CD4-positive, alpha-beta memory T cell (primary cell): ENCODE measurements at regions of chr11 and their contacts with region 1.

Region 1: DNA sequence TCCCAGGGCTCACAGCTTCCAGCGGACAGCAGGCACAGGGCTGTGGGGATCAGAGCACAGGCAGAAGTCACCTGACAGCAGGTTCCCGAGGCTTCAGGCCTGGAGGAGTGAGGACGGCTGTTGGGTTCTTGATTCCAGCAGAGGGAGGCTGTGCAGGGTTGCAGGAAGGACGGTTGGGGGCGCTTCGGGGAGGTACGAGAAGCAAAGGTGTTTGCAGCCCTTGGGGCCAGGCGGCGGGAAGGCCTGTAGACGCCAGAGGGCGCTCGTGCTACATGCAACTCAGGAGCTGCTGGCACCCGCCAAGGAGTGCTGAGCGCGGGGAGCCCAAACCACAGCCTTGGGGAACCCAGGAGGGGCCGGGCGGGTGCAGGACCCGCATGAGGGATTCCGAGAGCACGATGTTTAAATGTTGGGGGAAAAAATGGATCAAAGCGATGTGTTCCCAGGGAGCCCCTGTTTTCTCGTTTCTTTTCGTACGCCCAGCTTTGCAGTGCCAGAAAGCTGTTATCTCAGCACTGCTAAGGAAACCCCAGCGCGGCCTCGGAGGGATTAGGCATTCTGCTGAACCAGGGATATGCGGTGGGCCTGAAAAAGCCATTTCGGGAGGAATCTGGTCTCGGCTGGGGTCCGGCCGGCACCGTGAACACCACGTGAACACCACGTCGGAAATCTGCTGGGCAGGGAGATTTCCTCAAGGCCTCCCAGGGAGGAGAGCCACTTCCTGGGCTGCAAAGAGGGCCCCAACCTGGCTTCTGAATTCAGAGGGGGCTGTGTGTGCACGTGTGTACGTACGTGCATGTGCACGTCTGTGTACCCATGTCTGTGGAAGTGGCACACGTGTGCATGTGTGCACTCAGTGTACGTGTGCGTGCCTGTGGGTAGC is 88.1 kb downstream of the KCNQ1 start:
- DNase-seq: peak; percentile 82 to 88 (median 86)
- H3K4me3 ChIP-seq: no peak overlapping the region
- H3K4me3 Mint-ChIP-seq: peak overlapping the region; percentile 27 to 80 (median 72)
- H3K27ac ChIP-seq: no peak overlapping the region
- H3K27ac Mint-ChIP-seq: peak overlapping the region in 2 of 7 donors; percentile 24 to 37
- H3K4me1 ChIP-seq: peaks cover 14% of the 10 kb centered on the region
- H3K4me1 Mint-ChIP-seq: peaks cover 6 to 20% (median 14%) of the 10 kb centered on the region in 4 donors
- H3K27me3 ChIP-seq: no peaks in the 10 kb centered on the region
- H3K27me3 Mint-ChIP-seq: no peaks in the 10 kb centered on the region

Region 2: GRCh38 chr11:2305140-2305840 is 227.7 kb before region 1 on chr11:
- CTCF ChIA-PET with region 1: interaction called, 17 read pairs
- POLR2A ChIA-PET with region 1: no interaction called
- intact Hi-C with region 1: loop called (anchors 1 kb)
- DNase-seq: peak; percentile 71 to 79 (median 74)
- H3K4me3 ChIP-seq: peak overlapping the region; percentile 44 to 48
- H3K4me3 Mint-ChIP-seq: peak overlapping the region; percentile 63 to 91 (median 83)
- H3K27ac ChIP-seq: peak overlapping the region; percentile 52
- H3K27ac Mint-ChIP-seq: peak overlapping the region; percentile 29 to 95 (median 76)
- H3K4me1 ChIP-seq: peaks cover 75% of the 10 kb centered on the region
- H3K4me1 Mint-ChIP-seq: peaks cover 24 to 57% (median 41%) of the 10 kb centered on the region in 4 donors
- H3K27me3 ChIP-seq: no peaks in the 10 kb centered on the region
- H3K27me3 Mint-ChIP-seq: no peaks in the 10 kb centered on the region

Region 3: DNA sequence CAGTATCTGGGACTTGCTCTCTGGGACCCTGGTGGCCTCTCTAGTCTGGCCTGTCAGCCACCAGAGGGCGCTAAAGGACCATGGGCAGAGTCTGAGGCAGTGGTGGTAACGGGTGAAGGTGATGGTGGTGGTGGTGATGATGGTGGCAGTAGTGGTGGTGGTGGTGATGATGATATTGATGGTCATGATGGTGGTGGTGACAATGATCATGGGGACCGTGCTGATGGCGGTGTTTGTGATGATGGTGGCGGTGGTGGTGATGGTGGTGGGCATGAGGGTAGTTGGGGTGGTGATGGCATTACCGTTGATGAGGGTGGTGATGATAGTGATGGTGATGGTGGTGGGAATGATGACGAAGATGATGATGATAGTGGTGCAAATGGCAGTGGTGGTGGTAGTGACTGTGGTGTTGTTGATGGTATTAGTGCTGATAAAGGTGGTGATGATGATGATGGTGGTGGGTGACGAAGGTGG is 104.6 kb before region 1 on chr11:
- CTCF ChIA-PET with region 1: interaction called, 104 read pairs
- POLR2A ChIA-PET with region 1: interaction called, 4 read pairs
- intact Hi-C with region 1: no loop called
- DNase-seq: peak; percentile 77 to 83 (median 80)
- H3K4me3 ChIP-seq: no peak overlapping the region
- H3K4me3 Mint-ChIP-seq: no peak overlapping the region
- H3K27ac ChIP-seq: no peak overlapping the region
- H3K27ac Mint-ChIP-seq: no peak overlapping the region
- H3K4me1 ChIP-seq: no peaks in the 10 kb centered on the region
- H3K4me1 Mint-ChIP-seq: no peaks in the 10 kb centered on the region
- H3K27me3 ChIP-seq: no peaks in the 10 kb centered on the region
- H3K27me3 Mint-ChIP-seq: no peaks in the 10 kb centered on the region

Region 4: DNA sequence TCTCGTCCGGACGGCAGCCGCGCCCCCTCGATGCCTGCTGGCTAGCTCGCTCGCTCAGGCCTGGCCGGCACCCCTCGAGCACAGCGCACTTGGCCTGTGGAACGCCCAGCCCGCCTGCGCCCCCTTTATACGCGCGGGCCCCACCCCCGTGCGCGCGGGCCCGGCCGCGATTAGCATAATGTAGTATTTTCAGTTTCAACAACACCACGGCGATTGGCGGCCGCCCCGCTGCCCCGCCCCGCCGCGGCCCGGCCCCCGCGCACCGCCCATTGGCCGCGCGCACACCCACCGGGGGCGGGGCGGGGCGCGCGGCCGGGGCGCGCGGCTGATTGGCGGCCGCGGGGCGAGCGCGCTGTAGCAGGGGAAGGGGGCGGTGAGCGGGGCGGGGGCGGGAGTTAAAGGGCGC is 352.7 kb after region 1 on chr11 and contains the start of gene CDKN1C:
- CTCF ChIA-PET with region 1: interaction called, 303 read pairs
- POLR2A ChIA-PET with region 1: interaction called, 17 read pairs
- intact Hi-C with region 1: loop called (anchors 1 kb)
- DNase-seq: peak; percentile 86 to 88 (median 86)
- H3K4me3 ChIP-seq: peak within 1 kb of the TSS; percentile 61 to 86
- H3K4me3 Mint-ChIP-seq: peak within 1 kb of the TSS; percentile 87 to 97 (median 94)
- H3K27ac ChIP-seq: peak within 1 kb of the TSS; percentile 10
- H3K27ac Mint-ChIP-seq: peak within 1 kb of the TSS; percentile 61 to 93 (median 84)
- H3K4me1 ChIP-seq: peaks cover 17% of the 10 kb centered on the region
- H3K4me1 Mint-ChIP-seq: peaks cover 2 to 28% (median 16%) of the 10 kb centered on the region in 4 donors
- H3K27me3 ChIP-seq: no peaks in the 10 kb centered on the region
- H3K27me3 Mint-ChIP-seq: no peaks in the 10 kb centered on the region
- total RNA-seq, gene CDKN1C: 4.9 to 6.1 TPM

Region 5: GRCh38 chr11:2930704-2931428 is 397.9 kb after region 1 on chr11:
- CTCF ChIA-PET with region 1: interaction called, 30 read pairs
- POLR2A ChIA-PET with region 1: interaction called, 6 read pairs
- intact Hi-C with region 1: loop called (anchors 1 kb)
- DNase-seq: peak in 1 of 5 donors; percentile 30
- H3K4me3 ChIP-seq: peak overlapping the region; percentile 54 to 59
- H3K4me3 Mint-ChIP-seq: peak overlapping the region; percentile 65 to 89 (median 83)
- H3K27ac ChIP-seq: no peak overlapping the region
- H3K27ac Mint-ChIP-seq: peak overlapping the region in 6 of 7 donors; percentile 78 to 92 (median 84)
- H3K4me1 ChIP-seq: peaks cover 40% of the 10 kb centered on the region
- H3K4me1 Mint-ChIP-seq: peaks cover 12 to 44% (median 17%) of the 10 kb centered on the region in 4 donors
- H3K27me3 ChIP-seq: no peaks in the 10 kb centered on the region
- H3K27me3 Mint-ChIP-seq: peaks cover 3 to 4% of the 10 kb centered on the region in 2 donors

Region 6: DNA sequence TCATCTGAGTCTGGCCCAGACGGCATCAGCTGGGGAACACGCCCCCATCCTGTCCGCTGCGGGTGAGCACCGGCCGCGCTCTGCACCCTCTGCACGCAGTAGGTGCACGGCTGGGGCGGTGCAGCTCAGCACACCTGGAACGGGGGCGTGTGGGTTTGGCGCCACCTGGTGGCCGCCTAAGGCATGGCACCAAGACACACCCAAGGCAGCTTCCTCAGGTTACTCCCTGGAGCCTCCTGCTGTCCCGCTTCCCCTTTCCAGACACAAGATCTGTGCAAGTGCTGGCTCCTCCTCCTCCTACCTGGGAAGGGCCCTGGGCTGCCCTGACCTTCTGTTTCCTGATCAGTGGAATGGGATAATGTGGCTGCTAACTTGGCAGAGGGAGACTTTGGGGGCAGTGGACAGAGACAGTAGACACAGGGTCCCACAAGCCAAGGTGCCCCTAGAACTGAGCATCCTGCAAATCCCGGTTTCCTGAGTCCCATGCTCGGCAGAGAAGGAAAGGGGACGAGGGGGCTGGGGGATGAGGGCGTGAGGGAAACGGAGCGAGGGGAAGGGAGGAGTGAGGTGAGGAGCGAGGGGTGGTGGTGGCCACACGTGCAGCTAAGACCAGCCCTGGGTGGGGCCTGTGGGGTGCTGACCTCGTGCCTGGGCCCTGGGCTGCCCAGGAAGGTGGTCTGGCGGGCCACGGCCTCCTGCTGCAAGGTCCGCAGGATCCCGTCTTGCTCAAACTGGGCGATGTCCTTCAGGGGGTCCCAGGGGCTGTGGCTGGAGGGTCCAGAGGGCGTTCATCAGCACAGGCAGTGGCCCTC is 559.1 kb after region 1 on chr11:
- CTCF ChIA-PET with region 1: interaction called, 83 read pairs
- POLR2A ChIA-PET with region 1: interaction called, 3 read pairs
- intact Hi-C with region 1: no loop called
- DNase-seq: peak; percentile 64 to 74 (median 68)
- H3K4me3 ChIP-seq: no peak overlapping the region
- H3K4me3 Mint-ChIP-seq: no peak overlapping the region
- H3K27ac ChIP-seq: no peak overlapping the region
- H3K27ac Mint-ChIP-seq: no peak overlapping the region
- H3K4me1 ChIP-seq: no peaks in the 10 kb centered on the region
- H3K4me1 Mint-ChIP-seq: no peaks in the 10 kb centered on the region
- H3K27me3 ChIP-seq: no peaks in the 10 kb centered on the region
- H3K27me3 Mint-ChIP-seq: peaks cover 0 to 3% of the 10 kb centered on the region in 2 donors